H1 (cell line): ENCODE measurements at regions of chr15 and their contacts with region 1.

Region 1: GRCh38 chr15:49421991-49422390 is 1.1 kb upstream of the FGF7 start:
- DNase-seq: no peak
- H3K4me3 ChIP-seq: no peak overlapping the region
- H3K27ac ChIP-seq: no peak overlapping the region
- H3K4me1 ChIP-seq: peaks cover 0 to 3% (median 0%) of the 10 kb centered on the region in 4 experiments; a peak in 1 of 7 replicates
- H3K27me3 ChIP-seq: no peaks in the 10 kb centered on the region
- CTCF ChIP-seq: peak; percentile 19 to 68 (median 48); a peak in 3 of 4 replicates
- EP300 ChIP-seq: no peak
- POLR2A ChIP-seq: no peak
- RAD21 ChIP-seq: peak; percentile 82 to 87

Region 2: GRCh38 chr15:49235446-49236124 is 186.4 kb before region 1 on chr15:
- CTCF ChIA-PET with region 1: interaction called, 153 read pairs
- POLR2A ChIA-PET with region 1: interaction called, 5 read pairs
- DNase-seq: peak in 1 of 2 experiments; percentile 59
- H3K4me3 ChIP-seq: no peak overlapping the region
- H3K27ac ChIP-seq: no peak overlapping the region
- H3K4me1 ChIP-seq: 0 out of 7 replicates have a peak, but pooled peaks cover 0 to 2% (median 0%) of the 10 kb centered on the region in 4 experiments
- H3K27me3 ChIP-seq: no peaks in the 10 kb centered on the region
- CTCF ChIP-seq: peak in 2 of 3 experiments; percentile 80 to 88; a peak in 3 of 4 replicates
- EP300 ChIP-seq: no peak
- POLR2A ChIP-seq: no peak
- RAD21 ChIP-seq: peak; percentile 95 to 97

Region 3: DNA sequence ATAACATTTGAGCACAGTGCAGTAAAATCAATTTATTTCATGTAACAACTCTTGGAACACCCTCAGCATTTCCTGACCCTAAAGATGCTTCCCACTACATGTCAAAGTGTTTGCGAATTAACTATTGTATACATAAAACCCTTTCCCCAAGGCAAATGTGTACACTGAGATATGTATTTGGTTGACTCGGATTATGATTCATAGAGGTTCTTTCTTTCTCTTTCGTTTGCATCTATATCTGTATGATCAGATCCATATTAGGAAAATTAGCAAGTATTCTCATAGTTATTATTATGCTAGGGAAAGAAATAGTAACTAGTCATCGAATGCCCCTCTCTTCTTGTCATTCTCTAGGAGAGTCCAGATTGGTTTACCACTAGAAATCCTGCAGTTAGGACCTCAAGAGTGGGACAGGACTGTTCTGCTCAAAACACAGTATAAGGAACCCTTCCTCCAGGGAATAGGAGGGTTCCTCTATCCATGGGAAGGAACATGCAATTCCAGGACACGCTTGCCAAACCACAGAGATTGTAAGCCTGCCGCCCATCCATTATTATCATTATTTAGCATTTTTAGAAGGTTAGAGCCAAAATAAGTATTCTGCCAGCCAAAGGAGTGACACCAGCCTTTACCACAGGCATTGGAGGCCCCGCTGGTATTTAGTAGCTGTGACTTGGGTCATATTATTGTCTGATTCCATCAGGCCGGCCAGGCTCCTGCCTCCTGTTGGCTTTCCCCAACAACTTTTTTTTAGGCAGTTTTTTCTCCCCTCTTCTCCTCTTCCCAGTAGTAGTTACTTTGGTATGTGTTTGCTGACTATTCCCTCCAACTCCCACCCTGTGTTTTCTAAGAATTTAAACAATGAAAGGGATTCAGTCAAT is 151.2 kb before region 1 on chr15:
- CTCF ChIA-PET with region 1: interaction called, 12 read pairs
- POLR2A ChIA-PET with region 1: no interaction called
- DNase-seq: no peak
- H3K4me3 ChIP-seq: no peak overlapping the region
- H3K27ac ChIP-seq: no peak overlapping the region
- H3K4me1 ChIP-seq: peaks cover 0 to 6% (median 4%) of the 10 kb centered on the region in 4 experiments; a peak in 4 of 7 replicates
- H3K27me3 ChIP-seq: no peaks in the 10 kb centered on the region
- CTCF ChIP-seq: no peak
- EP300 ChIP-seq: no peak
- POLR2A ChIP-seq: no peak
- RAD21 ChIP-seq: no peak

Region 4: DNA sequence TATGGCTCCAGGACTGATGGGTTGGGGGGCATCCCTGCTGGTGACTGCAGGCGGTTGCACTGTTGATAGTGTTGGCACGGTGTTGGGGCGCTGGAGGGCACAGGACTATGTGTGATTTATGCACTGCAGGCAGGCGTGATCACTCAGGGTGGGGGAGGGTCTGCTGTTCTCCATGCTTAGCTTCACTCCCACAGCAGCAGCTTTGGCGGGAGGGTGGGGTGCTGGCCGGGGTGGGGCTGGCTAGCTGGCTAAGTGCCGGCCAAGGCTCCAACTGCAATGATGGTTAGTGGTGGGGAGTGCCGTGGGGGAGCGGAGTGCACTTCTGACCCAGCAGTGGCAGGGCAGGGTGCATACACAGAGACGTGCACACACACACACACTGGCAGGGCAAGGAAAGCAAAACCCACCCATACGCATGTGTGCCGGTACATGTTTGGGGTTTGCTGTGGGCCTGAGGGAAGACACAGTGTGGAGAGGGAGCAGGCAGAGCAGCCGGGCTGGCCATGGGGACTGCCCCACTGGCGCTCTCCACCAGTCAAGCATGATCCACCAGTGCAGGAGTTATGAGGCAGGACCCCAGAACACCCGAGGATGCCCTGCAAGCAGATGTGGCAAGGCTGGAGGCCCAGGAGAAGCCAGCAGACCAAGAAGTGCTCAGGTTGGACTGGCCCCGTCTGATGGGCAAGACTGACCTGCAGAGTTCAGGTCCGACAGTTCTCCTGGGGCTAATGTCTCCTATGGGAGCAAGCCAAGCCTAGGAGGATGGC is 15.5 kb before region 1 on chr15:
- CTCF ChIA-PET with region 1: interaction called, 16 read pairs
- POLR2A ChIA-PET with region 1: no interaction called
- DNase-seq: no peak
- H3K4me3 ChIP-seq: no peak overlapping the region
- H3K27ac ChIP-seq: no peak overlapping the region
- H3K4me1 ChIP-seq: no peaks in the 10 kb centered on the region
- H3K27me3 ChIP-seq: no peaks in the 10 kb centered on the region
- CTCF ChIP-seq: no peak
- EP300 ChIP-seq: no peak
- POLR2A ChIP-seq: no peak
- RAD21 ChIP-seq: no peak